Left lung (tissue), 14 donors: ENCODE measurements at regions of chr18 and their contacts with region 1.

Region 1: GRCh38 chr18:63320046-63320689 is 599 bp upstream of the BCL2 start:
- DNase-seq: peak; percentile 86 to 91 (median 89)
- ATAC-seq: peak; percentile 72
- H3K4me3 ChIP-seq: peak overlapping the region; percentile 29 to 76
- H3K27ac ChIP-seq: peak overlapping the region in 1 of 2 donors; percentile 71
- H3K4me1 ChIP-seq: peaks cover 12 to 46% of the 10 kb centered on the region in 2 donors
- H3K27me3 ChIP-seq: peaks cover 0 to 16% of the 10 kb centered on the region in 2 donors
- CTCF ChIP-seq: peak in 1 of 2 donors; percentile 6

Region 2: GRCh38 chr18:63016270-63016669 is 303.9 kb before region 1 on chr18:
- intact Hi-C with region 1: loop called in 1 of 2 experiments (anchors 5 kb)
- DNase-seq: peak in 2 of 4 donors; percentile 45 to 74
- ATAC-seq: peak; percentile 82
- H3K4me3 ChIP-seq: no peak overlapping the region
- H3K27ac ChIP-seq: no peak overlapping the region
- H3K4me1 ChIP-seq: no peaks in the 10 kb centered on the region
- H3K27me3 ChIP-seq: peaks cover 0 to 9% of the 10 kb centered on the region in 2 donors
- CTCF ChIP-seq: peak; percentile 70 to 80

Region 3: DNA sequence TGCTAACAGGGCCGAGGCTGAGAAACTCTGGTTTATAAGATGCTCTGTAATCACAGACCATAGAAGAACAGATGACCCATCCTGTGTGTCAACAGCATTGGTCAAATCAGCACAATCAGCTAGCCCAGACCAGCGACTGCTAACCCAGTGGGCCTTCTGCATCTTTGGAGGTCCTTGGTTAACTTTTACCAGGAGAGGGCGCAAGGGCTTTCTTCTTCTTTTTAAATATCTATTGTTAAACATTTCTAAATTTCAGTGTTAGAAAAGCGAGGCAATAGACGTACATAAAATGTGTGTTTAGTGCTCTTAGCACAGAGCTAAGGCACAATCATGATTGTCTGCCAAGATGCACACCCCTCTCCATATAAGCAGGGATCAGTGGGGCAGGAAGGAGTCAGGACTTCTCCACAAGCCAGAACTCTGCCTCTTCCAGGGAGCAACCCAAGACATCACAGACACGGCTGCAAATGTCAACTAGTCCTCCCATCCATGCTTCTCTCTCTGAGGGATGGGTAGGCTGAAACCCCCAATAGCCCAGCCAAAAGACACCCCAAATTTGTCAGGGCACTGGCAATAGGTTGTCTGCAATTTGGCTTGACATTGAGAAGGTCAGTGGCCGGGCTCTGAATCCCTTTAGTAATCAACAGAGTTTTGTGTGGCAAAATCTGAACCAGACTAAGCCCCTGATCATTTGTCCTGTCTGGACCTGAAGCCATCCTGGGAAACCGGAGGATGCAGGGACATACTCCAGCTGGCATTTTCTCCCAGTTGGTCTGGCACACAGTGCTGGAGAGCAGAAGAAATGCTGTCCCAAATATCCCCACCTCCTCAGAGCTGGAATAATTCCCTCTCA is 188.8 kb before region 1 on chr18:
- intact Hi-C with region 1: loop called in 1 of 2 experiments (anchors 5 kb)
- DNase-seq: peak in 2 of 4 donors; percentile 63 to 72
- ATAC-seq: peak; percentile 79
- H3K4me3 ChIP-seq: no peak overlapping the region
- H3K27ac ChIP-seq: no peak overlapping the region
- H3K4me1 ChIP-seq: peaks cover 0 to 4% of the 10 kb centered on the region in 2 donors
- H3K27me3 ChIP-seq: no peaks in the 10 kb centered on the region
- CTCF ChIP-seq: peak; percentile 58 to 67